Right ventricle myocardium inferior (tissue), 1 donor: ENCODE measurements at regions of chr13 and their contacts with region 1.

Region 1: DNA sequence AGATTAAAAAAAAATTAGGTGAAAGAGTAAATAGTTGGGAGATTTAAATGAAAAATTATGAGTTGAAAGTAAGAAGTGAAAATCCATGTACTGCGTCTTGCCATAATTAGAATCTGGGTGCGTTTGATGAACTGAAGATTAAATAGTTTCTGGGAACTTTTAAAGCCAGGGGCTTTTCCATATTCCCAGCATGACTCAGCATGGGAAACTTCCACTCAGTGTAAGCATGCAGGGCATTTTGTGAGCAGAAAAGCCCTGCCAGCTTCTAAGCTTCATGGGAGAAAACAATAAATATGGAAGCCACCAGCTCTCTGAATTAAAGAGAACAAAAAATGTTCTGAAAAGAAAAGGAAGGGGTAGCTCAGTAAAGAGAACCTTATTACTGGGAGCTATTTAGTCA is 62.0 kb upstream of the EDNRB start:
- DNase-seq: no peak
- ATAC-seq: peak; percentile 34

Region 2: DNA sequence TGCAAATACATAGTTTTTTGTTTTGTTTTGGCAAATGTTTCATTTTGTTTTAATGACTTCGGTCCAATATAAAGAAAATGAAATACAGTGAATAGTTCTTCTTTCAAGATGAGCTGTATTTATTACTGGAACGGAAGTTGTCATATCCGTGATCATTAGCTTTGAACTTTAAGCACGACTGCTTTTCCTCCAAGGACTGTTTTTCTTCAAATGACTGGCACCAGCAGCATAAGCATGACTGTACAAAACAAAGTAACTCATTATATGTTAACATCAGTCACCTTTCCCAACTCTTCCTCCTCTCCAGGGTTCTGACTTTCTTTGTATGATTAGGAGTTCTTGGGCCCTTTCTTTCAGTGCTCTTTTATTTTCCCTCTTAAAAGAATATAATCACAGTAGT is 82.5 kb before region 1 on chr13:
- intact Hi-C with region 1: loop called (anchors 5 kb)
- DNase-seq: no peak
- ATAC-seq: no peak

Region 3: GRCh38 chr13:78045916-78046315 is 65.3 kb after region 1 on chr13:
- intact Hi-C with region 1: loop called (anchors 10 kb)
- DNase-seq: no peak
- ATAC-seq: peak; percentile 46

Region 4: GRCh38 chr13:78102121-78102677 is 121.6 kb after region 1 on chr13:
- intact Hi-C with region 1: loop called (anchors 10 kb)
- DNase-seq: no peak
- ATAC-seq: peak; percentile 97